ENCODE measurements at regions of chr18 and their contacts with region 1.

Region 1: DNA sequence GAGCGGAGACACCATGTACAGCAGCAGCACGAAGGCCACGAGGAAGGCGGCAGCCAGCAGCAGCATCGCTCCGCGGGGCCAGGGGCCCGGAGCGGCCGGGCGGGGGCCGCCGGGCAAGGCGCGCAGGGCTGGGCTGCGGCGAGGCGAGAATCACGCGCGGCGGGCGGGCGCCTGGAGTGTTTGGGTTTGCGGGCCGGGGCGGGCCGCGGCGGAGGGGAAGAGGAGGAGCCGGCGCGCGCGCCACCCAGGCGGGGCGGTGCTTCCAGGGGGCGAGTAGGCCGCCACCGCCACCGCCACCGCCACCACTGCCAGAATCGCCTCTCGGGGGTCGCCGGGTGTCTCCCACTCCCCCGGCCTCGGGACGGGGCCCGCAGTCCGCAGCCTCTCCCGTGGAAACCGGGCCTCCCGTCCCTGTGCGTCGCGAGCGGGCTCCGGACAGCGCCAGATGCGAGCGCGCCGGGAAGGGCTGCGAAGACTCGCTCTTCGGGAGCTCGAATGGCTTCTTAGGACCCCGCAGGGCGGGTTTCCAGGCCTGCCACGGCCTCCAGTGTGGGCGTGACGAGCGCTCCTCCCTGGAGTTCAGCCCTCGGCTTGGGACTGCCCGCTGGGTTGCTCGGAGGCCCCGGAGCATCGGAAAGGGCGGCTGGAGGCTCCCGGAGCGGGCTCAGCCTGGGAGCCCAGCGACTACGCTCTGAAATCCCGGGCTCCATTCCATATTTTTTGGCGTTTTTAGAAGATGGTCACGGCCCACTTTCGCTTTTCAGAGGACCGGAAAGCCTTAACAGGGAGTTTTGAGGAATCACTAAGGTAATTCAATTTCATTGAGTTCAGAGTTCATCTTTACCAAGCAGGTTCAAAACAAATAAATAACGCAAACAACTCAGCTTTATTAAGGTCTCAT is at the start of gene KDSR:
- DNase-seq: peak; percentile 98
- H3K4me3 ChIP-seq: peak within 1 kb of the TSS; percentile 85 to 95 (median 94)
- H3K27ac ChIP-seq: peak within 1 kb of the TSS; percentile 89
- H3K4me1 ChIP-seq: peaks cover 12% of the 10 kb centered on the region
- H3K27me3 ChIP-seq: no peaks in the 10 kb centered on the region
- CTCF ChIP-seq: no peak
- POLR2A ChIP-seq: peak; percentile 92
- total RNA-seq, gene KDSR: 40.6 and 43.1 TPM in 2 replicates

Region 2: DNA sequence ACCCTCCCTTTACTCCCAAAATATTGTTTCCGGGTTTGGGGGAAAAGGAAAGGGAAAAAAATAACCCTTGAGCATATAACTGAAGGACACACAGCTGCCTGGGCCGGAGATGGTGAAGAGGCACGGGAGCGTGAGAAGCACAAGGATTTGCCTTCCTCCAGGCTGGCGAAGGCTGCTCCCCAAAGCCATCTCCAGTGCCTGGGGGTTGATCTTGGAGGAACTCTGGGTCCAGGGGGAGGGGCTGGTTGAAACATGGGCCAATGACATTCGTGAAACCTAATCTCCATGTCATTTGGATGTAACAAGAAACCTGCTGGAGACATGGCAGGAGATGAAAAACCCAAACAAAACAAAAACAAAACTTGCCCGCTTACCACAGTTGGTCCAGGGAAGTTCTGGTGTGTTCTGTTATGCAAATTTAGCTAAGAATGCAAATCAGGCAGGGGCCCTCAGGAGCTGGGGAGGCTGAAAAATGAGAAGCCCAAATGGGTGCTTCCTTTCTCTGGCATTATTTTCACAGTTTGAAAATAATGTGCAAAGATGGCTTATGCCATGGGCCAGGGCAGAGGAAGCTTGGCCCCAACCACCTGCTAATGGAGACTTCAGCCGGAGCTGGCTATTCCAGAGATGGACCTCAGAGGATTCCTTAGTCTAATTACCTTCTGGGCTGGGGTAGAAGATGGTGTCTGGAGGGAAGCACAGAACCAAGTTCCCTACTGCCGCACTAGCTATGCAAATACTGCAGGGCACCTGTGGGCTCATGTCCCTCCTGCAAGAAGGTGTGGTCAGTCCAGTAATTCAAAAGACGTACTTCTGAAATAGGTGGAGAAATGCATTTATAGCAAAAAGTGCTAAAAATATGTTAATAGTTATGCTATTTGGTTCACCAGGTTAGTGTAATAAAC is 228.6 kb before region 1 on chr18:
- CTCF ChIA-PET with region 1: no interaction called
- POLR2A ChIA-PET with region 1: no interaction called
- dilution Hi-C with region 1: no loop called
- intact Hi-C with region 1: loop called (anchors 1 kb)
- DNase-seq: no peak
- H3K4me3 ChIP-seq: peak overlapping the region in 1 of 3 experiments; percentile 16
- H3K27ac ChIP-seq: peak overlapping the region; percentile 75
- H3K4me1 ChIP-seq: peaks cover 22% of the 10 kb centered on the region
- H3K27me3 ChIP-seq: no peaks in the 10 kb centered on the region
- CTCF ChIP-seq: no peak
- POLR2A ChIP-seq: no peak

Region 3: GRCh38 chr18:63311118-63312018 is 55.9 kb before region 1 on chr18:
- CTCF ChIA-PET with region 1: no interaction called
- POLR2A ChIA-PET with region 1: no interaction called
- dilution Hi-C with region 1: no loop called
- intact Hi-C with region 1: no loop called
- DNase-seq: no peak
- H3K4me3 ChIP-seq: no peak overlapping the region
- H3K27ac ChIP-seq: no peak overlapping the region
- H3K4me1 ChIP-seq: no peaks in the 10 kb centered on the region
- H3K27me3 ChIP-seq: no peaks in the 10 kb centered on the region
- CTCF ChIP-seq: no peak
- POLR2A ChIP-seq: no peak

Region 4: DNA sequence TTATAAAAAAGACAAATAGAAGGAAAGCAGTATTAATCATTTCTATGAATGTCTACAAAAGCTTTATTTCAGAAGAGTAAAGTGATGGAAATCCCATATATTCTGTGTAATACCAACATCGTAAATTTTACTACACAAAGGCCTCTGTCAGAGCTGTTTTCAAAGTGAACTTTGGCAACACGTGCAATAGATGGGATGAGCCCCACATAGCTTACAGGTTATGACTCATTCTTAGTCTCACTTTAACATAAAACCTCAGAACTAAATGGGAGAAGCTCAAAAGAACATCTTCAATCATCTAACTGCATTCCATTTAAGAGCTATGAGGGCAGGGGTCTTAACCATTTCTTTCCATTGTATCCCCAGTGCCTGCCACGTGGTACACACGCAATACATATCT is 43.5 kb after region 1 on chr18:
- CTCF ChIA-PET with region 1: no interaction called
- POLR2A ChIA-PET with region 1: no interaction called
- dilution Hi-C with region 1: no loop called
- intact Hi-C with region 1: loop called (anchors 2 kb)
- DNase-seq: peak; percentile 61
- H3K4me3 ChIP-seq: no peak overlapping the region
- H3K27ac ChIP-seq: no peak overlapping the region
- H3K4me1 ChIP-seq: peaks cover 11% of the 10 kb centered on the region
- H3K27me3 ChIP-seq: no peaks in the 10 kb centered on the region
- CTCF ChIP-seq: no peak
- POLR2A ChIP-seq: no peak